CD4-positive, alpha-beta T cell (primary cell): ENCODE measurements at regions of chr6 and their contacts with region 1.

Region 1: DNA sequence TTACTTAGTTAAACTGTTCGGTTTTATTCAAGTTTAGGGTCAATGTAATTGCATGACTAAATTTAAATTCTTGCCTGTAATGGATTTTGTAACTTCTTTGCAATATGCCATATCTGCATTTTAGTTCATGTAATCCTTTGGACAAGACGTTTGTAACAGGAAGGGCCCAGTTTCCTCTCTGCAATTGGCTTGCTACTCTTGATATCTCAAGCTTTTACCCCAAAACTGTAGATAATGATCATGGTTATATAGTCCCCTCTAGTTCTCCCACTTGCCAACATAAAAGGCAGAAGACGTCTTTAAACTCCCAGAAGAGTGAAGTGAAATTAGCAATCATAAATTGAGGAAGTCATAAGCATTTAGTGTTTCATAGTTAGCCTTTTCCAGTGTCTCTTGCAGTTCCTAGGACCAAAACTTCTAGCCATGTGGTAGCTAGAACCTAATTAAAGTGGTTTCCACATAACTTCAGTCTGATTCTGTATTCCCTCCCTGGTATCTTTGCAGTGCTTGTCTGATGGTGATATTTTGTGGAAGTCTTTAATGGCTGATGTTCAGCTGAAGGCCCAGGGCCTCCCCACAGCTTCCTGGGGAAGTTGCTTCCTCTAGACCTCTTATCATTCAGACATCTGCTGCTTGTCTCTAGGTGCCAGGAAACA is 117.8 kb upstream of the SUPT3H start:
- DNase-seq: peak in 9 of 14 experiments; percentile 3 to 76 (median 23)
- ATAC-seq: peak; percentile 86
- H3K4me3 ChIP-seq: no peak overlapping the region
- H3K4me3 Mint-ChIP-seq: peak overlapping the region; percentile 50
- H3K27ac ChIP-seq: no peak overlapping the region
- H3K27ac Mint-ChIP-seq: peak overlapping the region; percentile 59
- H3K4me1 ChIP-seq: peaks cover 41% of the 10 kb centered on the region
- H3K4me1 Mint-ChIP-seq: peaks cover 56% of the 10 kb centered on the region
- H3K27me3 ChIP-seq: no peaks in the 10 kb centered on the region
- H3K27me3 Mint-ChIP-seq: no peaks in the 10 kb centered on the region
- CTCF ChIP-seq: no peak

Region 2: DNA sequence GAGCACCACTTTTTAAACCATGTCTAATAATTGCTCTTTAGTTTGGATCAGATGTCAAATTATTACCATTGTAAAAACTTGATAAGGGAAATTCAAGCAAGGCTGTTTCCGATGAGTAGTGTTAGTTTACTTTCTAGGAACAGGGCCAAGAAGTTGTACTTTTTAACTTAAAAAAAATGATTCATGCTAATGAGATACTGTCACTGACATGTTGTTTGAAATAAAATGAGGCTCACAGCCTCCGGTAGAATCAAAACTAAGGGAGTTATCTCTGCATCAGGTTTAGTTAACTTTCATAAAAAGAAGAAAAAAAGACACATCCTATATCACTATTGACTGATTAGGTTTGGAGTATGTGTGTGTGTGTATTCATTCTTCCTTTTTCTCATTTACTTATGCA is 62.6 kb before region 1 on chr6:
- CTCF ChIA-PET with region 1: interaction called, 3 read pairs
- POLR2A ChIA-PET with region 1: interaction called, 4 read pairs
- intact Hi-C with region 1: loop called in 1 of 2 experiments (anchors 5 kb)
- DNase-seq: peak in 2 of 14 experiments; percentile 38 to 59
- ATAC-seq: peak; percentile 30
- H3K4me3 ChIP-seq: peak overlapping the region; percentile 33
- H3K4me3 Mint-ChIP-seq: peak overlapping the region; percentile 12
- H3K27ac ChIP-seq: no peak overlapping the region
- H3K27ac Mint-ChIP-seq: no peak overlapping the region
- H3K4me1 ChIP-seq: peaks cover 26% of the 10 kb centered on the region
- H3K4me1 Mint-ChIP-seq: peaks cover 85% of the 10 kb centered on the region
- H3K27me3 ChIP-seq: no peaks in the 10 kb centered on the region
- H3K27me3 Mint-ChIP-seq: no peaks in the 10 kb centered on the region
- CTCF ChIP-seq: no peak